Dorsolateral prefrontal cortex (tissue), 120 donors: ENCODE measurements at regions of chr12 and their contacts with region 1.

Region 1: DNA sequence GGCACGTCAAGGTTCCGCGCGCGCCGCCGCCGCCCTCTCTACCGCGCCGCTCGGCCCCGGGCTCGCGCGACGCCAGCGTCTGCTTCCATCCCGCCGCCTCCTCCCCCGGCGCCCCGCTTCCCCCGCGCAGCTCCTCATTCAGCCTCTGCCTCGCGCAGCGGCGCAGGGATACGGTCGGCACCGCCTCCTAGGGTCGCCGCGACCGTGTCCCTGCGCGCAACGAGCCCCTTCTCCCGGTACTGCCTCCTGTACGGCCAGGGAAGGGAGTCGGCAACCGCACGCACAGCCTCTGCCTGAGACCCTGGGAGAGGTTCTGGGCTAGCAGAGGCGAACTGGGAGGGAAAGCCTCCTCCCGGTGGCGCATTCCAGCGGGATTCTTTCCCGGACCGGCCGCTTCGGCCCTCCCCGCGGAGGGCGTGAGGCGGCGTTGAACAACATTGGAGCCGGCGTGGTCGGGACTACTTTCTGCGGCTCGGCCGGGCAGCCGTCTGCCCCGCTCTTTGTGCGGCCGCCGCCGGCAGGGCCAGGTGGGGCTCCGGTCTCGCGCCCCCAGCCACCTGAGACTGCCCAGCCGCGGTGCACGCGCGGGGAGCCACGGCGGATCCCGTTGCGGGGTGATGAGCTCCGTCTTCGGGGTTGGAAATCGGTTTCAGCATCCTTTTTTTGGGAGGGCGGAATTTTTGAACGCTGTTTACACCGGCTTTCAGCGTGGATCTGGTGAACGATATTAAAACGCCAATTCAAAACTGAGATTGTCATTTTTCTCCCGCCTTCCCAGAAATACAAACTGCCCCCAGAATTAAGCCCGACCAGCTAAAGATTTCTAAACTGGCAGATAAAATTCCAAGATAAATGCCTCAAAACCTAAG is at the start of gene LRP6:
- DNase-seq: peak; percentile 73 to 93 (median 86)
- H3K4me3 ChIP-seq: peak within 1 kb of the TSS; percentile 56 to 98 (median 84)
- H3K27ac ChIP-seq: peak within 1 kb of the TSS; percentile 75 to 99 (median 96)
- H3K27me3 ChIP-seq: no peaks in the 10 kb centered on the region
- CTCF ChIP-seq: peak in 44 of 56 donors; percentile 5 to 66 (median 28)
- total RNA-seq, gene LRP6: 25.9 to 64.7 (median 42.9) TPM

Region 2: GRCh38 chr12:12081836-12082497 is 185.1 kb before region 1 on chr12:
- intact Hi-C with region 1: loop called (anchors 5 to 10 kb)
- DNase-seq: no peak
- H3K4me3 ChIP-seq: no peak overlapping the region
- H3K27ac ChIP-seq: peak overlapping the region in 35 of 59 donors; percentile 7 to 72 (median 42)
- H3K27me3 ChIP-seq: no peaks in the 10 kb centered on the region
- CTCF ChIP-seq: peak in 54 of 56 donors; percentile 26 to 79 (median 56)

Region 3: DNA sequence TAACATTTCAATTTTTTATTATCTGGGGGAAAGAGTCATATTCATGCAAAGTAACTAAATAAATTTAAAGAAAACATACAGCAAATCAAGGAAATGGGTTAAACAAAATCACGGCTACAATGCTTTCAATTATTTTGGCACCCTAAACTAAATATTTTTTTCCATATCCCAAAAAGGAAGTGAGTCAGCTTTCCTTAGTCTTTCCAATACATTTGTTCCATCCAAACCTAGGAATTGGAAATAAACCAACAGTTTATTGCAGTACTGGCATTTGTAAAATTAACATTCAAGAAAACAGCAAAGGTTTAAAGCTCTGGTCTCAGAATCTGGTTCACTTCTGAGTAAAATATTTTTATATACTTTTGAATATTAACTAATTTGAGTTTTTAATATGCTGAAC is 107.1 kb before region 1 on chr12:
- intact Hi-C with region 1: loop called (anchors 10 kb)
- DNase-seq: no peak
- H3K4me3 ChIP-seq: no peak overlapping the region
- H3K27ac ChIP-seq: peak overlapping the region in 1 of 59 donors; percentile 6
- H3K27me3 ChIP-seq: no peaks in the 10 kb centered on the region
- CTCF ChIP-seq: no peak

Region 4: DNA sequence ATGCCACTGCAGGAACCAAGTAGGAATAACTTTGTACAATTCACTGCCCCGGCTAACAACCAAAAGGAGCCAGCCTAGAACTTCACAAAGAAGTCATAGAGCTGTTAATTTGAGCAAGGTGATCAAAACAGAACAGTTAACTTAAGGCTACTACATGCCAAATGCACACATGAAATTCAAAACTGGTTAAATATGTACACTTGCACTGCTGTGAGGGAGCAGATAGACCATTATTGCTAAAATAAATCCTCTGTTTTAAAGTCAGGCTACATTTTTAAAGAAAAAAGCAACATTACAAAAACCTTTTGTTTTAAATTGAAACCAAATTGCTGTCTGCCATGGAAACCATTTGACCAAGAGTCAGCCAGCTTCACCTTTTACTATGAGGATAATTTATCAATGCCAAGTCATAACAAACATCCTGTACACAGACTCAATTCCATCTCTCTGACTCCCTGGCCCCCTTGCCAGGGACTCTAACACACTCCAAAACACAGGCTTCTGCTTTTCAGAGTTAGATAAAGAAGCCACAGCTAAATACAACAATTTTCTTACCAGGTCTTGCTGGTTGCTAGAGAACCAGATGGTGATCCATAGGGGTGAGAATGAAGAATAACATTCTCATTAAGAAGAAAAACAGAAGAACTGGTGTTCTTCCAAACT is 84.3 kb before region 1 on chr12:
- intact Hi-C with region 1: no loop called
- DNase-seq: no peak
- H3K4me3 ChIP-seq: peak overlapping the region in 5 of 59 donors; percentile 1 to 15 (median 4)
- H3K27ac ChIP-seq: peak overlapping the region in 45 of 59 donors; percentile 8 to 70 (median 46)
- H3K27me3 ChIP-seq: no peaks in the 10 kb centered on the region
- CTCF ChIP-seq: no peak

Region 5: GRCh38 chr12:12327802-12328201 is 60.7 kb after region 1 on chr12:
- intact Hi-C with region 1: loop called (anchors 5 kb)
- DNase-seq: no peak
- H3K4me3 ChIP-seq: peak overlapping the region in 1 of 59 donors; percentile 25
- H3K27ac ChIP-seq: peak overlapping the region in 13 of 59 donors; percentile 9 to 38 (median 21)
- H3K27me3 ChIP-seq: no peaks in the 10 kb centered on the region
- CTCF ChIP-seq: peak; percentile 43 to 91 (median 75)

Region 6: GRCh38 chr12:12334367-12335040 is 67.4 kb after region 1 on chr12:
- intact Hi-C with region 1: loop called (anchors 5 kb)
- DNase-seq: peak in 5 of 10 donors; percentile 10 to 54 (median 35)
- H3K4me3 ChIP-seq: peak overlapping the region in 3 of 59 donors; percentile 5 to 9 (median 7)
- H3K27ac ChIP-seq: peak overlapping the region in 33 of 59 donors; percentile 3 to 79 (median 63)
- H3K27me3 ChIP-seq: no peaks in the 10 kb centered on the region
- CTCF ChIP-seq: peak; percentile 60 to 95 (median 80)

Region 7: GRCh38 chr12:12736759-12737676 is 469.9 kb after region 1 on chr12:
- intact Hi-C with region 1: loop called in 1 of 2 experiments (anchors 10 kb)
- DNase-seq: no peak
- H3K4me3 ChIP-seq: peak overlapping the region in 50 of 59 donors; percentile 2 to 57 (median 34)
- H3K27ac ChIP-seq: peak overlapping the region in 56 of 59 donors; percentile 22 to 89 (median 76)
- H3K27me3 ChIP-seq: no peaks in the 10 kb centered on the region
- CTCF ChIP-seq: peak; percentile 15 to 83 (median 70)